Naive thymus-derived CD4-positive, alpha-beta T cell (primary cell): ENCODE measurements at regions of chr16 and their contacts with region 1.

Region 1: GRCh38 chr16:80804056-80804450 is 345 bp downstream of the CDYL2 start:
- DNase-seq: peak; percentile 26 to 69 (median 52)
- ATAC-seq: peak; percentile 69
- H3K4me3 ChIP-seq: no peak overlapping the region
- H3K4me3 Mint-ChIP-seq: peak overlapping the region; percentile 85 to 96 (median 94)
- H3K27ac ChIP-seq: no peak overlapping the region
- H3K27ac Mint-ChIP-seq: peak overlapping the region in 7 of 9 donors; percentile 46 to 98 (median 78)
- H3K4me1 ChIP-seq: peaks cover 0 to 10% of the 10 kb centered on the region in 2 donors
- H3K4me1 Mint-ChIP-seq: peaks cover 12 to 59% (median 18%) of the 10 kb centered on the region in 7 donors
- H3K27me3 ChIP-seq: no peaks in the 10 kb centered on the region
- H3K27me3 Mint-ChIP-seq: peaks cover 0 to 9% (median 0%) of the 10 kb centered on the region in 5 donors

Region 2: GRCh38 chr16:80526425-80527061 is 277.5 kb before region 1 on chr16:
- CTCF ChIA-PET with region 1: interaction called, 7 read pairs
- POLR2A ChIA-PET with region 1: no interaction called
- intact Hi-C with region 1: loop called (anchors 5 kb)
- DNase-seq: peak; percentile 18 to 62 (median 51)
- ATAC-seq: peak; percentile 89
- H3K4me3 ChIP-seq: no peak overlapping the region
- H3K4me3 Mint-ChIP-seq: no peak overlapping the region
- H3K27ac ChIP-seq: no peak overlapping the region
- H3K27ac Mint-ChIP-seq: peak overlapping the region in 1 of 9 donors; percentile 4
- H3K4me1 ChIP-seq: no peaks in the 10 kb centered on the region
- H3K4me1 Mint-ChIP-seq: peaks cover 0 to 20% (median 0%) of the 10 kb centered on the region in 7 donors
- H3K27me3 ChIP-seq: no peaks in the 10 kb centered on the region
- H3K27me3 Mint-ChIP-seq: peaks cover 0 to 26% (median 0%) of the 10 kb centered on the region in 5 donors

Region 3: DNA sequence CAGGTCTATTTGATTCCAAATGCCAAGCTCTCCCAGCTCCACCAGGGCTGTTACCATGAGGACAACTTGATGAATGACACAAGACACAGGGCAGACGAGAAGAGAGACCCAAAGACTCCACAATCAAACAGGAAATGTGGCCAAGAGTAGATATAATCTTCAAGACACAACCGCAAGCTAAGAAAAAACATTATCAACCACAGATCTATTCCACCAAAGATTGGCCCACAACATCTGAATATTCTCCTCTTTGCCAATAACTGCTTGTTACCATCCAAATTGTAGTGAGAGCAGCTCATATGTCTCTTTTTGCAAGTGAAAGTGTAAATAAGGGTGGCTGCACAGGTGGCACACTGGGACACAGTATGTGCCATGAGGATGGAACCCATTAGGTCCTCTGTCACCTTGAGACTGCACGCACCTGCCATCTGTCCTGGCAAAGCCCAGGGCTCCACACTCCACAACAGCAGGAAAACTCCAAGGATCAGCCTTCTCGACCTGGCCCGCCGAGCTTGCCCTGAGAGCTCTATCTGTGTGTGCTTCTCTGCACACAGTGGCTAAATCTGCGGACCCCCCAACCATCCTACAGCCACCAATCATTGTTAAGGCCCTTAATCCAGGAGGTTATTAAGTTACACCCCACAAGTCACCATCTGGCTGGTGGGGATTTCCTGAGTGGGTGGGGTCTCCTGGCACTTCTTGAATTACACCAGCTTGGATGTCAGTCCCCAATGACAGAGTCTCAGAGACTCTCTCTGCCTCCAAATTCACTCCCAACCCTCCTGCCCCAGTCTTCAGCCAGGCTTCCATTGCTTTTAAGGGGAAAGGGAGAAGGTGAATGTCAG is 212.8 kb before region 1 on chr16:
- CTCF ChIA-PET with region 1: no interaction called
- POLR2A ChIA-PET with region 1: interaction called, 3 read pairs
- intact Hi-C with region 1: loop called (anchors 1 to 5 kb)
- DNase-seq: peak in 8 of 9 donors; percentile 35 to 83 (median 68)
- ATAC-seq: peak; percentile 92
- H3K4me3 ChIP-seq: peak overlapping the region; percentile 42
- H3K4me3 Mint-ChIP-seq: peak overlapping the region; percentile 45 to 79 (median 64)
- H3K27ac ChIP-seq: no peak overlapping the region
- H3K27ac Mint-ChIP-seq: peak overlapping the region in 8 of 9 donors; percentile 1 to 82 (median 38)
- H3K4me1 ChIP-seq: peaks cover 10 to 19% of the 10 kb centered on the region in 2 donors
- H3K4me1 Mint-ChIP-seq: peaks cover 17 to 50% (median 29%) of the 10 kb centered on the region in 7 donors
- H3K27me3 ChIP-seq: no peaks in the 10 kb centered on the region
- H3K27me3 Mint-ChIP-seq: peaks cover 0 to 35% (median 5%) of the 10 kb centered on the region in 5 donors

Region 4: DNA sequence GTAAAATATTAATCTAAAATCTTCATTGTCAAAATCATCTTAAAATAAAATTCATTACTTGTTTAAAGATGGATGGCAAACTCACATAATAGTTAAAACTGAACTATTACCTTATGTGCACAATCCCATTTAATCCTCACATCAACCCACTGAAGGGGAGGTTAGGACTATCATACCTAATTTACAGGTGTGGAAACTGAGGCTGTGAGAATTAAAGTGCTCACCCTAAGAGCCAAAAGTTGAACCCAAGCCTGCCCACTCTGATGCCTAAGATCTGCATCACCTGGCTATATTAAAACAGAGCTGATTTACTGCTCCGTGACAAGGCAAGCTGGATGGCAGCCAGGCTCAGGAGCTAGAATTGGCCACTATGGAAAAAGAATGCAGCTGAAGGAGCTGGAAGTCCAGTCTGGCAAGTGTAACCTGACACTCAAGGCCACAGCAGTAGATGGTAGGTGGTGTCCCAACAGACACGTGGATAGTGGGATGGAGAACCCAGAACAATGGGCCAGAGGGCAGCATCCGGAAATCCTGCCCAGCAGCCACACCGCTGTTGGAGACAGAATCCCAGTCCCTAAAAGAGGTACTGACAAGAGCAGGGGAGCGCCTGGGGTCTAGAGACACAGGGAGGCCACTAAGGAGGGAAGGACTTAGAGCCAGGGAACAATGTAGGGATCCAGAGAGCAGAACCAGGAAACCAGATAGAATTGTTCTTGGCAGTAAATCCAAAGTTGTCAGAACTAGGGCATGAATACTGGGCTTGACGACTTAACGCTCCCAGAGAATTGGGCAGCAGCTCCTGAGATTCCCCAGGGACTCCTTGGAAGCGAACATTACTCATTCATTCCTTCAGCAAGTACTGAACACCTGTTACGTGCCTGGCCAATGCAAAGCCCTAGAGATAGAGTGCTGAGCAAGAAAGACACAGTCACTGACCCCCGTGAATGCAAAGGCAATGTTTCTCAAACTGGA is 85.5 kb before region 1 on chr16:
- CTCF ChIA-PET with region 1: no interaction called
- POLR2A ChIA-PET with region 1: no interaction called
- intact Hi-C with region 1: loop called in 1 of 2 experiments (anchors 5 kb)
- DNase-seq: no peak
- ATAC-seq: no peak
- H3K4me3 ChIP-seq: no peak overlapping the region
- H3K4me3 Mint-ChIP-seq: no peak overlapping the region
- H3K27ac ChIP-seq: no peak overlapping the region
- H3K27ac Mint-ChIP-seq: peak overlapping the region in 1 of 9 donors; percentile 38
- H3K4me1 ChIP-seq: peaks cover 8 to 14% of the 10 kb centered on the region in 2 donors
- H3K4me1 Mint-ChIP-seq: peaks cover 3 to 20% (median 11%) of the 10 kb centered on the region in 7 donors
- H3K27me3 ChIP-seq: no peaks in the 10 kb centered on the region
- H3K27me3 Mint-ChIP-seq: no peaks in the 10 kb centered on the region

Region 5: GRCh38 chr16:81444448-81445121 is 640.5 kb after region 1 on chr16 and contains the start of gene CMIP:
- CTCF ChIA-PET with region 1: no interaction called
- POLR2A ChIA-PET with region 1: no interaction called
- intact Hi-C with region 1: loop called in 1 of 2 experiments (anchors 10 kb)
- DNase-seq: peak; percentile 66 to 89 (median 79)
- ATAC-seq: peak; percentile 88
- H3K4me3 ChIP-seq: peak within 1 kb of the TSS; percentile 91
- H3K4me3 Mint-ChIP-seq: peak within 1 kb of the TSS; percentile 85 to 94 (median 90)
- H3K27ac ChIP-seq: peak within 1 kb of the TSS; percentile 77
- H3K27ac Mint-ChIP-seq: peak within 1 kb of the TSS; percentile 90 to 97 (median 94)
- H3K4me1 ChIP-seq: peaks cover 35 to 37% of the 10 kb centered on the region in 2 donors
- H3K4me1 Mint-ChIP-seq: peaks cover 26 to 54% (median 48%) of the 10 kb centered on the region in 7 donors
- H3K27me3 ChIP-seq: no peaks in the 10 kb centered on the region
- H3K27me3 Mint-ChIP-seq: peaks cover 0 to 41% (median 0%) of the 10 kb centered on the region in 5 donors
- total RNA-seq, gene CMIP: 28.9 to 75.4 (median 38.2) TPM